GM10248 (cell line): ENCODE measurements at regions of chr3 and their contacts with region 1.

Region 1: DNA sequence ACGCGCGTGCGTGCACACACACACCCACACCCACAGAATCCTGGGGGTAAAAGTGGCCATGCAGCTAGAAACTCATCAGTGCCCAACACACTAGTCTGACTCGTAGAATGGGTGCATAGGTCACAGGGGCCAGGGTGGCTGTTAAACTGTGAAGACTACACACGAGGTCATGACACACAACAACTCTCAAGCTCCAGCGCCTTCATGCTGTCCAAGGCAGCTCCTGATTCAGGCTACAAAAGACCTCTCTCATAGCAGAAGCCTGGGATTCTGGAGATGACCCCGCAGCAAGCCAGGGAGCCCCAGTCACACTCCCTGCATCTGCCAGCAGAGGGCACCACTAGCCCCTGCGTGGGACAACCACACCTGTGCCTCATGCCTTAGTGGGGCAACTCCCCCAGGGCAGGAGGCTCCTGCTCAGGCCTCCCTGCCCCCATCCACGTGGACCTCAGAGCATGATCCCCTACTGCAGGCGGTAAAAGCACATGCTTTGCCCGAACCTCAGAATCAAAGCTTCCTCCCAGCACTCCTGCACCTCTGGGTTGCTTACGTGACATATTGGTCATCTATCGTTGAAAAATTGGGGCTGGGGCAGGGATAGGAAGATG is 93.1 kb downstream of the LRIG1 start:
- DNase-seq: peak; percentile 88
- CTCF ChIP-seq: peak; percentile 95

Region 2: DNA sequence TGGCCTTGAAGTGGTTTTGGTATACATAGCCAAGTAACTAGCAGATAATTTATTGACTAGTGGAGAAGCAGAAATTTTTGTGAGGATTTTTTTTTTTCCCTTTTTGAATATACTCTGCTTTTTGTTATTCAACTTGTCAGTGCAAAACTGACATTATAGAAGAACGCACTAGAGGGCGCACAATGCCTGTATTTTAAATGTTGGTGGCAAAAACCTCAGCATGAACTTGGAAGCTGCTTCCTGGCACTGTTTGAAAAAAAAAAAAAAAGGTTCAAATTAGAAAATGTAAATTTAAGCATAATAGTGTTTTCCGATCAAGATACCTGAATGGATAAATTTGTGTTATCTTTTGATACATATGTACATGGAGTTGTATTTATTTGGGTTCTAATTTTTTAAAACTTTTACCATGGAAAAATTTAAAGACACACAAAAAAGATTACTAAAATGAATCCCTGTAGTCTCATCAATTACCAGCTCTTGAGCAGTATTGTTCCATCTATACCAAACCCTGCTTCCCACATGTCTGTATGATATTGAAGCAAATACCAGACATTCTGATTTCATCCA is 130.9 kb before region 1 on chr3:
- CTCF ChIA-PET with region 1: interaction called, 10 read pairs
- POLR2A ChIA-PET with region 1: no interaction called
- DNase-seq: no peak
- CTCF ChIP-seq: peak; percentile 68

Region 3: GRCh38 chr3:66394019-66394752 is 13.5 kb before region 1 on chr3:
- CTCF ChIA-PET with region 1: interaction called, 108 read pairs
- POLR2A ChIA-PET with region 1: no interaction called
- DNase-seq: peak; percentile 85
- CTCF ChIP-seq: no peak

Region 4: DNA sequence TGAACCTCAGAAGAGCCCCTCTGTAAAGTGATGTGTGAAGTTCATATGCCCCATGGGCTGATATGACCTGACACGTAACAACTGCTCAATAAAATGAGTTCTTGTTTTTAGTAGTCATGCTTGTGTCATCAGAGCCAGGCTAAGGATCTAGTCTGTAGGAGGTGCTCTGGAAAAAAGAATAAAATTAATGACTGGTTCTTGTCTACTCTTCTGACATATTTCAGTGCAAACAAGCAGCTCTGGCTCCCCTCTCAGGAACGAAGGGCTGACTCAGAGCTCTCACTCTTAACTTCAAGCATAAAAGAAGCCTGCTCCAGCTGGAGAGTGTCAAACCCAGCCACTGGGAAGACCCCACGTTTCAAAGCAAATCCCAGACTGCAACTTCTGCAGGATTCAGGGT is 16.1 kb after region 1 on chr3:
- CTCF ChIA-PET with region 1: interaction called, 27 read pairs
- POLR2A ChIA-PET with region 1: no interaction called
- DNase-seq: no peak
- CTCF ChIP-seq: no peak

Region 5: DNA sequence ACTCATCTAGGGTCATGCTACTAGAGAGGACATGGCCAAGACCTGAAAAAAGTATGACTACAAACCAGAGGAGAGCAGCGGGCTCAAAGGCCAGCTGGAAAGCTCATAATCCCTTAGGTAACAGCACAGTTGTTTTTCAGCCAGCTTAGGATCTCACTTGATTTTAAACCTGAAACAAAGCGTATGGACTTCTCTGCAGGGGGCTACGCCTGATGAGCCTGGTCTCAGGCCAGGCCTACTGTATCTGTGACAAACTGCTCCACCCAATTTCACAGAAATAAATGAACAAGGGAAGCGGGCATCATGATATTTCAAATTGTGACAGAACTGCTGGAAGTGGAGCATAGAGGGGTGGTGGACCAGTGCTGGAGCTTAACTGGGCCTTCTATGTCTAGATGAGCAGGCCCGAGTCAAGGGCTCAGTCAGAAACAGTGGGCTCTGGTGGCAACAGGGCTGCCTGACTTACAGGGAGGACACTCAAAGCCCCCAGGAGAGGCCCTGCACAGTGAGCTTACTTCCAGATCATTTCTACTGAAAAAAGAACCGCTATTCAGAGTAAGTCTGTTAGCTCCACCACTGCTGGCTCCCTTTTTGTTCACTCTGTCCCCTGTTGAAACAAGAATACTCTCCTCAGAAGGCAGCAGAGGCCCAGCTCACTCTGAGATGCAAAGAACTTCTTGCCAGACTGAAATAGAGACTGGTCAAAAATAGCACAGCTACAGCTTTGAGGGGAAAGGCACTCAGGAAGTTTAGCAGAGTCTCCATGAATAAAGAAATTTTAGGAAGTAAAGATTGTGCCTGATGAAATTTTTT is 46.1 kb after region 1 on chr3:
- CTCF ChIA-PET with region 1: interaction called, 17 read pairs
- POLR2A ChIA-PET with region 1: no interaction called
- DNase-seq: no peak
- CTCF ChIP-seq: no peak

Region 6: DNA sequence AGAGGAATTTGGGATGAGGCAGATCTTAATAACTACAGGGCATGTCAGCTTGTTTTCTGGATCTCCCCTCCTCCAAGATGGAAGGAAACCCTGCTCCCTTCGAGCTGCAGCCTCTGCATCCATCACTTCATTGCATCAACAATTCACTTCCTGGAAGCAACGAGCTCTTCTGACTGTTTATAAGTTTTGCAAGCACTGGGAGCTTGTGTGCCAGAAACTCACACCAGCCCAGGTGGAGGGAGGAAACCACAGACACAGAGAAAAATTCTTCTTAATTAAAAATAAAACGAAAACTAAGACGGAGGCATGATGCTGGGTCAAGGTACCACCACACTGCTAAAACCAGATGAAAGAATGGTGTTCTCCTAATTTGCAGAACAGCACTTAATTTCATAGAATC is 82.5 kb after region 1 on chr3:
- CTCF ChIA-PET with region 1: interaction called, 14 read pairs
- POLR2A ChIA-PET with region 1: no interaction called
- DNase-seq: no peak
- CTCF ChIP-seq: no peak

Region 7: DNA sequence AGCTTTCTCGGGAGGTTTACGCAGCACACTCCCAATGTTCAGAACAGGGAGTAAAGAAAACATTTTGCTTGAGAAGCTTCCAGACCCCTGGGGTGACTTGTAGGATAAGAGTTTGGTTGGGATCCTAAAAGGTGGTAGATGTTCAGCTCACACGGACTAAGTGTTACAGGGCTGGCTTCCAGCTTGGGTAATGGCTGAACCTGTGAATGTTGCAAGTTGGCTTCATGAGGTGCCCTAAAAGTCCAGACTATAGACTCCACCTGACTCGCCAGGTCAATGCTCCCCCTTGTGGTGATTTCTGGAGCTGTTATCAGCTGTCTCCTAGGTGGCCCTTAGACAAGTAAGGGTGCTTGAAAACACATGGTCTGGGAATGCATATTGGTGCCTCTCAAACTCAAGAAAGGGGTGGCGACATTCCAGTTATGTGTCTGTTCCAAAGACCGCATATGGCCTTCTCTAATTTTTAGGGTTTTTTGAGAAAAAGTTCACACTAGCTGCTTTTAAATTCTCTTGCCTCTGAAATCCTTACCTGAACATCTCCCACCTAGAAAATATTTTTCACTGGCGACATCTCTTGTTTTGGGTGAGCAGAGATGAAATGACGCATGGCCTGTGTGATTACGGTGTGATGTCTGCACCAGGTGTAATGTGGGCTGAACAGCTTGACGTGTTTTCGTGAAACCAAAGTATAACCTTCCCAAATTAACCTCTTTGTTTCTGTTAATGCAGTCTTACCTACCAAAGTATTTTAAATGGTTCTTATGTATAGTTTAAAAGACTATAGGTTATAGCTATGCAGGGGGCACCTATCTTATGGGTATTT is 414.7 kb after region 1 on chr3:
- CTCF ChIA-PET with region 1: interaction called, 176 read pairs
- POLR2A ChIA-PET with region 1: no interaction called
- DNase-seq: peak; percentile 56
- CTCF ChIP-seq: peak; percentile 75